H1 (cell line): ENCODE measurements at regions of chr18 and their contacts with region 1.

Region 1: DNA sequence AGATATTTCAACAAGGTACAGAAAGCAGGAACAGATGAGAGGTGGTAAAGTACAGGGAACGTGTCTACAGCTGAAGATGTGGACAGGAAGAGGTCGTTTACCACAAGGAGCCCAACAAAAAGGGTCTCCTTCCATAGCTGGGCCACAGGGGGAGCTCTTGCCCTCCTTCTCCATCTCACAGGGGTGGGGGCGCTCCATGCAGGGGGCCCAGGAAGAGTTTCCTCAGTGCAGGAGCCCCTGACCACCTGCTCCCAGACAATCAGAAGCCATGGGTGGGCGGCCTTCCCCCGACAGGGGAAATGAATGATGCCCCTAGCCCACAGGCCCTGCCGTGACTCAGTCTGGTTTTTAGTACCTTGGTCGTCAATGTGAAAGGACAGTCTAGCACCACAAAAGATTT is 163.6 kb upstream of the ZNF516 start:
- DNase-seq: peak in 1 of 2 experiments; percentile 83
- H3K4me3 ChIP-seq: no peak overlapping the region
- H3K27ac ChIP-seq: no peak overlapping the region
- H3K4me1 ChIP-seq: no peaks in the 10 kb centered on the region
- H3K27me3 ChIP-seq: no peaks in the 10 kb centered on the region
- CTCF ChIP-seq: peak; percentile 83 to 89 (median 86)
- EP300 ChIP-seq: peak in 1 of 2 experiments; percentile 64; a peak in 1 of 3 replicates
- POLR2A ChIP-seq: no peak
- RAD21 ChIP-seq: peak; percentile 78 to 82

Region 2: DNA sequence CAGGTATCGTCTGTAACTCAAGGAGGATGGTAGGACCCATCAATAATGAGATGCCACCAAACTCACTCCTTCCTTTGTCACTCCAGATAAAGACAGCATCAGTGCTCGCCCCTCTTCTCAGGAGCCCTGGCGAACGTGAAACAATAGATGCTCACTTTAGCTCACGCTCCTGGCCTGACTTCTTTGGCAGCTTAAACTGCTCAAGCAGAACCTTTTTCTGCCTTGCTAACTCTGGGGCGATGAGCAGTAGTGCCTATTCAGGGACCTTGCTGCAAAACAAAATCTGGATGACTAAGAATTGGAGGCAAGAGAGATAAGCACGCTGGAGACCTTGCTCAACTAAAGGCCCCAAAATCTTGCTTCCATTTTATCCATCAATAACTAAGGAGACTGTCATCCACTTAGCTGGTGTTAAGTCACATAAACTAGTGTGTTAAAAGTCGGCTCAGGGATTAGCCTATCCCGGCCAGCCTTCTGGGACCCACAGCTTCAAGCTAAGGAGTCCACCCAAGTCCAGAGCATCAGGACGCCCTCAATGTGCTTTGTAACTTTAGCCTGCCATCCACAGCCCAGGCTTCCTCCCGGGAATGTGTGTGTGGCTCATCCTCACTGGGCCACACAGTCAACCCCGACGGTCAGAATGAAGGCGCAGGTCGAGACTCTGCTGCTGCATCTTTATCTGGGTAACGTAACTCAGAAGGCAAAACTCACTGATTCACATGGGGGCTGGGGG is 202.4 kb before region 1 on chr18:
- CTCF ChIA-PET with region 1: interaction called, 10 read pairs
- POLR2A ChIA-PET with region 1: no interaction called
- DNase-seq: peak in 1 of 2 experiments; percentile 44
- H3K4me3 ChIP-seq: no peak overlapping the region
- H3K27ac ChIP-seq: no peak overlapping the region
- H3K4me1 ChIP-seq: peaks cover 6 to 18% (median 16%) of the 10 kb centered on the region in 4 experiments
- H3K27me3 ChIP-seq: peaks cover 0 to 19% (median 12%) of the 10 kb centered on the region in 4 experiments; a peak in 5 of 7 replicates
- CTCF ChIP-seq: no peak
- EP300 ChIP-seq: no peak
- POLR2A ChIP-seq: no peak
- RAD21 ChIP-seq: no peak

Region 3: GRCh38 chr18:76562286-76563122 is 96.1 kb before region 1 on chr18:
- CTCF ChIA-PET with region 1: no interaction called
- POLR2A ChIA-PET with region 1: no interaction called
- DNase-seq: peak in 1 of 2 experiments; percentile 13
- H3K4me3 ChIP-seq: no peak overlapping the region
- H3K27ac ChIP-seq: no peak overlapping the region
- H3K4me1 ChIP-seq: peaks cover 0 to 8% (median 2%) of the 10 kb centered on the region in 4 experiments; a peak in 2 of 7 replicates
- H3K27me3 ChIP-seq: no peaks in the 10 kb centered on the region
- CTCF ChIP-seq: no peak
- EP300 ChIP-seq: no peak
- POLR2A ChIP-seq: no peak
- RAD21 ChIP-seq: no peak

Region 4: DNA sequence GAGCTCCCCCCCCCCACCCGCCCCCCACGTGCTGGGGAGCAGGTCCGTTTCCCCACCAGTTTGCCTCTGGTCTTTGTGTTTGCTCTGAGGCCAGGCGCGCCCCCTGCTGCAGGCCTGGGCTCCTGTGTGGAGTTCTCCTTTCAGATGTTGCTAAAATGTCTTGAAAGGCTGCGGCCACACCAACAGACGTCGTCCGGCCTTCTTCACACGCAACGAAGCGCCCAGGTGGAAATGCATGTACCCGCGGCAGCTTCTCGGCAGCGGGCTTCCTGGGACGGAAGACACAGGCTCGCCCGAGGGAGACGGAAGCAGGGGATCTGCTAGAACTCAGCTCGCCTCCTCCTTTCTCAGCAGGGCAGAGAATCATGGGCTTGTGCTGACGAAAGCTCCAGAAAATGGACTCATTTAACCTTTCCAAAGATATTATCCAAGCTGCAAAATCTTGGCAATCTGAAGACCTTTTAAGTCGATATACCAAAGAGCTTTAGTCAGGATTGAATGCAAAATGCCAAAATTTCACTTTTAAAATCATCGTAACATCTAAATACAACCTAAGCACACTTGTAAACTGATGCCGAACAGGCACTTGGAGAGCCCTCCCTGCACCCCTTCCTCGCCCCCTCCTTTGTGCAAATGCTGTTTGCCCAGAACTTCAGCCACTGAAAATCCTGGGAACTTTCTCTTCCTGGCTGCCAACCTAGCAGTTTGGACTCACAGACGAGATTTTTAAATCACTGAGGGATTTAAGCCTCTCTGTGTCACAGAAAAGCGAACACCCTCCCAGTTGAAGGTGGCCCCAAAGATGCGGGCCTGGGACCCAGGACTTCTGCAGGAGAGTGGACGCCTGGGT is 38.1 kb before region 1 on chr18:
- CTCF ChIA-PET with region 1: interaction called, 27 read pairs
- POLR2A ChIA-PET with region 1: no interaction called
- DNase-seq: no peak
- H3K4me3 ChIP-seq: peak overlapping the region; percentile 44 to 70 (median 62)
- H3K27ac ChIP-seq: no peak overlapping the region
- H3K4me1 ChIP-seq: peaks cover 6 to 19% (median 10%) of the 10 kb centered on the region in 4 experiments
- H3K27me3 ChIP-seq: peaks cover 0 to 16% (median 13%) of the 10 kb centered on the region in 4 experiments; a peak in 4 of 7 replicates
- CTCF ChIP-seq: peak; percentile 59 to 73 (median 66)
- EP300 ChIP-seq: no peak
- POLR2A ChIP-seq: no peak
- RAD21 ChIP-seq: peak; percentile 60 to 70

Region 5: DNA sequence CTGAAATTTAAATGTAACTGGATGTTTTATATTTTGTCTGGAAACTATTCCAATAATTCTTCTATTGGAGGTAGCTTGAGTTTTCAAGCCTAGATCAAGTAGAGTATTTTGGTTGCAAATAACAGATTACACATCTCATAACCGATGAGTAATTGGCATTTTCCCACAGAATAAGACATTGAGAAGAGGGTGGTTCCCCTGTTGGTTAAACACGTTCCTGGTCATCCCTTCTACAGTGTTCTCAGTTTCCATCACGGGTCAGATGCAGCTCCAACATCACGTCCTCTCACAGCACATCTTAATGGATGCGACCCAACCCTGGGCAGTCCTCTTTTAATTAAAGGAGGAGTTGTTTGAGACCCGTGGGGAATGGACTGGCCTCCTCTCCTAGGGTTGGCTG is 14.6 kb before region 1 on chr18:
- CTCF ChIA-PET with region 1: interaction called, 24 read pairs
- POLR2A ChIA-PET with region 1: interaction called, 3 read pairs
- DNase-seq: no peak
- H3K4me3 ChIP-seq: no peak overlapping the region
- H3K27ac ChIP-seq: no peak overlapping the region
- H3K4me1 ChIP-seq: no peaks in the 10 kb centered on the region; a peak in 1 of 7 replicates
- H3K27me3 ChIP-seq: no peaks in the 10 kb centered on the region
- CTCF ChIP-seq: no peak
- EP300 ChIP-seq: no peak
- POLR2A ChIP-seq: no peak
- RAD21 ChIP-seq: no peak

Region 6: GRCh38 chr18:76686737-76687262 is 28.2 kb after region 1 on chr18:
- CTCF ChIA-PET with region 1: interaction called, 131 read pairs
- POLR2A ChIA-PET with region 1: no interaction called
- DNase-seq: peak in 1 of 2 experiments; percentile 67
- H3K4me3 ChIP-seq: no peak overlapping the region; a peak in 1 of 8 replicates
- H3K27ac ChIP-seq: 0 out of 2 replicates have a peak overlapping the region, but pooled peaks have one; percentile 13
- H3K4me1 ChIP-seq: peaks cover 0 to 11% (median 0%) of the 10 kb centered on the region in 4 experiments; a peak in 5 of 7 replicates
- H3K27me3 ChIP-seq: no peaks in the 10 kb centered on the region
- CTCF ChIP-seq: peak in 2 of 3 experiments; percentile 51 to 55; a peak in 3 of 4 replicates
- EP300 ChIP-seq: no peak
- POLR2A ChIP-seq: no peak
- RAD21 ChIP-seq: peak; percentile 59 to 68

Region 7: DNA sequence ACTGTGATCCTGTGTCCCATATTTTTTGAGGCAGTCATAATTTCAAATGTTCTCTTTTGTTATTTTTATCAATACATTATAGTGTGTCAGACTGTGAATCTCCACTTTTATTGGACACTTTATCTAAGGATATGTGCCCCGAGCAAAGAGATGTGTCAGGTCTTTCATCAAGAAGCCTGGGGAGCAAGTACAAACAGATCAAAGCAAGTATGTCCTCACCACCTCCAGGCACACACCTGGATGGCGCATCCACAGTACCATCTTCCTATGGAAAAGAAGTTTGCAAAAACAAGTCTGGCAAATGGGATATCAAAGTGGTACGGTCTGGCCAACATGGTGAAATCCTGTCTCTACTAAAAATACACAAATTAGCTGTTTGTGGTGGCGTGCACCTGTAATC is 82.7 kb after region 1 on chr18:
- CTCF ChIA-PET with region 1: no interaction called
- POLR2A ChIA-PET with region 1: no interaction called
- DNase-seq: no peak
- H3K4me3 ChIP-seq: no peak overlapping the region
- H3K27ac ChIP-seq: no peak overlapping the region
- H3K4me1 ChIP-seq: no peaks in the 10 kb centered on the region
- H3K27me3 ChIP-seq: no peaks in the 10 kb centered on the region
- CTCF ChIP-seq: no peak
- EP300 ChIP-seq: no peak
- POLR2A ChIP-seq: no peak
- RAD21 ChIP-seq: no peak